ENCODE measurements at regions of chr19 and their contacts with region 1.

Region 1: GRCh38 chr19:47765523-47766358 is 12.8 kb upstream of the SELENOW start:
- DNase-seq: no peak
- H3K4me3 ChIP-seq: no peak overlapping the region
- H3K27ac ChIP-seq: no peak overlapping the region
- H3K27me3 ChIP-seq: peaks cover 4% of the 10 kb centered on the region
- CTCF ChIP-seq: peak; percentile 80

Region 2: GRCh38 chr19:47745010-47745901 is 20.5 kb before region 1 on chr19 and contains the start of gene NOP53:
- CTCF ChIA-PET with region 1: no interaction called
- POLR2A ChIA-PET with region 1: no interaction called
- DNase-seq: peak; percentile 95
- H3K4me3 ChIP-seq: peak within 1 kb of the TSS; percentile 75
- H3K27ac ChIP-seq: peak within 1 kb of the TSS; percentile 90
- H3K27me3 ChIP-seq: no peaks in the 10 kb centered on the region
- CTCF ChIP-seq: no peak
- polyA plus RNA-seq, gene NOP53: 114 and 123 TPM in 2 replicates

Region 3: DNA sequence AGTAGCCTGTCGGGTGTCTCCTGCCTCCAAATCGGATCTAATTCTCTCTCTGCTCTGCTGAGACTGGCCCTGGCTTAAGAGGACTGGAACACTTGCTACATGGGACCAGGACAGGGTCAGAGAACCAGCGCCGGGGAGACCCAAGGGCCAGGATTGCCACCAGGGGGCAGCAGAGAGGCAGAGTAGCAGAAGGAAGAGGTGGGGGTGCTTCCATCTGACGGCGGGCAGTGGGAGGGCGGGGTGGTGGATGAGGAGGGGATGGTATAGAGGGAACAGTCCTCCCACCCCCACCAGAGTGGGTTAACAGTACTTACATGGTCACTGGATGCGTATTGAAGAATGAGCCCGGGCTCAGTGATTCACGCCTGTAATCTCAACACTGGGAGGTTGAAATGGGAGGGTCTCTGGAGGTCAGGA is 24.7 kb after region 1 on chr19:
- CTCF ChIA-PET with region 1: interaction called, 17 read pairs
- POLR2A ChIA-PET with region 1: no interaction called
- DNase-seq: no peak
- H3K4me3 ChIP-seq: no peak overlapping the region
- H3K27ac ChIP-seq: no peak overlapping the region
- H3K27me3 ChIP-seq: no peaks in the 10 kb centered on the region
- CTCF ChIP-seq: peak; percentile 86

Region 4: DNA sequence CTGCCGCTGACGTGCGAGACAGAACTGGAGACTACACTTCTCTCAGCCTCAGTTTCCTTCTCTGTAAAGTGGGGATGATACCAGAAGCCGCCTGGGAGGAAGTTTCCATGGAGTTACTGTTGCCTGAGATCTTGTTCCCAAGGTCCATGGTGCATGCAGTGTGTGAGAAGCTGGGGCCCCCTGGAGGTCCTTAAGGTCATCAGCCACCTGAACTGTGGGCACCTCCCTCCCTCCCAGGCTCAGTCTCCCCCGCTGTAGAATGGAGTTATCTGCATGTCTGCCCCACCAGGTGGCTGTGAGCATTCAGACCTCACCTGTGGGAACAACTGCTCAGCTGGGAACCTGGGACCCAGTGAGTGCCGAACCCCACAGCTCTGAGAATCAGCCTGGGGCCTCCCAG is 58.7 kb after region 1 on chr19:
- CTCF ChIA-PET with region 1: no interaction called
- POLR2A ChIA-PET with region 1: interaction called, 10 read pairs
- DNase-seq: no peak
- H3K4me3 ChIP-seq: no peak overlapping the region
- H3K27ac ChIP-seq: no peak overlapping the region
- H3K27me3 ChIP-seq: peaks cover 38% of the 10 kb centered on the region
- CTCF ChIP-seq: no peak

Region 5: GRCh38 chr19:47863514-47863936 is 97.8 kb after region 1 on chr19:
- CTCF ChIA-PET with region 1: interaction called, 17 read pairs
- POLR2A ChIA-PET with region 1: no interaction called
- DNase-seq: peak; percentile 21
- H3K4me3 ChIP-seq: no peak overlapping the region
- H3K27ac ChIP-seq: no peak overlapping the region
- H3K27me3 ChIP-seq: peaks cover 6% of the 10 kb centered on the region
- CTCF ChIP-seq: peak; percentile 97

Region 6: DNA sequence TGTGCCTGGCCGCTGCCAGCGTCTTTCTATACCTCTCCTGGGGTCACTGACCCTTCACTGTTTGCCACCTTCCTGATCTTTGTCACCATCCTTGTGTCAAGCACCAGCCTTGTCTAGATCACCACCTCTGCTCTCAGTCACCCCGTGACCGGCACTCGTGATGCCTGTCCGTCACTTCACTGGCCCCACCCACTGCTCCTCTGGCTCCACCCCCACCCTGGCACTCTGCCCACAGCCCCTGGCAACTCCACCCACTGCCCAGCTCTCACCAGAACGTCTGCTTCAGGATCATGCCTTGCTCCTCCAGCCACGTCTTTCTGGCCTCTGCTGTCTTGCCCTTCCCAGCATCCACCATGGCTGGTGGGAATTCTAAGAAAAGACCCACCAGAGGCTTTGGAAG is 369.7 kb after region 1 on chr19:
- CTCF ChIA-PET with region 1: no interaction called
- POLR2A ChIA-PET with region 1: no interaction called
- DNase-seq: no peak
- H3K4me3 ChIP-seq: no peak overlapping the region
- H3K27ac ChIP-seq: no peak overlapping the region
- H3K27me3 ChIP-seq: no peaks in the 10 kb centered on the region
- CTCF ChIP-seq: no peak

Measured in AG04450 (cell line).